Heart left ventricle (tissue), 16 donors: ENCODE measurements at regions of chr4 and their contacts with region 1.

Region 1: GRCh38 chr4:71713611-71714203 is 70.2 kb downstream of the GC start:
- DNase-seq: peak in 1 of 5 donors; percentile 11
- ATAC-seq: peak in 1 of 4 donors; percentile 45
- H3K4me3 ChIP-seq: no peak overlapping the region
- H3K27ac ChIP-seq: no peak overlapping the region
- H3K4me1 ChIP-seq: no peaks in the 10 kb centered on the region
- H3K27me3 ChIP-seq: no peaks in the 10 kb centered on the region
- CTCF ChIP-seq: peak in 11 of 12 donors; percentile 32 to 68 (median 57)
- POLR2A ChIP-seq: no peak

Region 2: GRCh38 chr4:70601422-70602039 is 1112.2 kb before region 1 on chr4:
- intact Hi-C with region 1: loop called in 1 of 10 experiments (anchors 5 kb)
- DNase-seq: peak in 3 of 5 donors; percentile 19 to 34 (median 23)
- ATAC-seq: peak in 3 of 4 donors; percentile 53 to 68 (median 64)
- H3K4me3 ChIP-seq: no peak overlapping the region
- H3K27ac ChIP-seq: no peak overlapping the region
- H3K4me1 ChIP-seq: no peaks in the 10 kb centered on the region
- H3K27me3 ChIP-seq: no peaks in the 10 kb centered on the region
- CTCF ChIP-seq: peak; percentile 35 to 65 (median 58)
- POLR2A ChIP-seq: no peak

Region 3: DNA sequence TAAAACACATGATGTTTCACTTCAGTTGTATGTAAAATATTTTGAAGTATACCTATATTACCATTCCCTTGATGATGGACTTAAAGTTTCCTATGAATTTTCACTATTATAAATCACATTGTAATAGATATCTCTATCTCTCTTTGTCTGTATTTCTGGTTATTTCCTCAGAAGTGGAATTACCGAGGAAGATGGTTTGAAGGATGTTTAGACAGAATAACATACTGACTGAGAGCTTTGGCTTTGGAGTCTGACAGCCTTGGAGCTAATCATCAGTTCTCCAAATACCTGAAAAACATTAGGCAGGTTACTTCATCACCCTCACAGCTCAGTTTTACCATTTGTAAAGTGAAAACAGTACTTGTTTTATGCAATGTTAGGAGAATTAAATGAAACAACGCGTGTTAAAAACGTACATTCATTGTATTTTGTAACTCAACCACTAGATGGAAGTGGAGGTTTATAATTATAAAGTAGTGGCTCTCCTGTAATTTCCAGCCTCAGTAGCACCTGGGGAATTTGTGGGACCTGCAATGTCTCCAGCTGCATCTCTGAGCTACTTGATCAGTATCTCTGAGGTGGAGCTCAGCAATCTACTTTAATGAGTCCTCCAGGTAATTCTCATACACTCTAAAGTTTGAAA is 1061.7 kb before region 1 on chr4:
- intact Hi-C with region 1: loop called in 4 of 10 experiments (anchors 5 to 10 kb)
- DNase-seq: no peak
- ATAC-seq: peak in 3 of 4 donors; percentile 26 to 60 (median 34)
- H3K4me3 ChIP-seq: no peak overlapping the region
- H3K27ac ChIP-seq: no peak overlapping the region
- H3K4me1 ChIP-seq: peaks cover 0 to 6% (median 0%) of the 10 kb centered on the region in 12 donors
- H3K27me3 ChIP-seq: peaks cover 0 to 5% (median 0%) of the 10 kb centered on the region in 9 donors
- CTCF ChIP-seq: peak; percentile 37 to 65 (median 56)
- POLR2A ChIP-seq: no peak

Region 4: GRCh38 chr4:71050809-71051208 is 662.9 kb before region 1 on chr4:
- intact Hi-C with region 1: loop called in 1 of 10 experiments (anchors 5 kb)
- DNase-seq: no peak
- ATAC-seq: no peak
- H3K4me3 ChIP-seq: no peak overlapping the region
- H3K27ac ChIP-seq: no peak overlapping the region
- H3K4me1 ChIP-seq: no peaks in the 10 kb centered on the region
- H3K27me3 ChIP-seq: no peaks in the 10 kb centered on the region
- CTCF ChIP-seq: peak in 2 of 12 donors; percentile 17 to 34
- POLR2A ChIP-seq: no peak

Region 5: GRCh38 chr4:71229477-71230270 is 484.0 kb before region 1 on chr4:
- intact Hi-C with region 1: loop called in 1 of 10 experiments (anchors 5 kb)
- DNase-seq: peak in 3 of 5 donors; percentile 30 to 41 (median 31)
- ATAC-seq: peak in 2 of 4 donors; percentile 61 to 71
- H3K4me3 ChIP-seq: peak overlapping the region in 5 of 12 donors; percentile 0 to 18 (median 8)
- H3K27ac ChIP-seq: peak overlapping the region in 10 of 12 donors; percentile 38 to 85 (median 74)
- H3K4me1 ChIP-seq: peaks cover 0 to 40% (median 13%) of the 10 kb centered on the region in 12 donors
- H3K27me3 ChIP-seq: no peaks in the 10 kb centered on the region
- CTCF ChIP-seq: peak; percentile 44 to 80 (median 68)
- POLR2A ChIP-seq: no peak

Region 6: DNA sequence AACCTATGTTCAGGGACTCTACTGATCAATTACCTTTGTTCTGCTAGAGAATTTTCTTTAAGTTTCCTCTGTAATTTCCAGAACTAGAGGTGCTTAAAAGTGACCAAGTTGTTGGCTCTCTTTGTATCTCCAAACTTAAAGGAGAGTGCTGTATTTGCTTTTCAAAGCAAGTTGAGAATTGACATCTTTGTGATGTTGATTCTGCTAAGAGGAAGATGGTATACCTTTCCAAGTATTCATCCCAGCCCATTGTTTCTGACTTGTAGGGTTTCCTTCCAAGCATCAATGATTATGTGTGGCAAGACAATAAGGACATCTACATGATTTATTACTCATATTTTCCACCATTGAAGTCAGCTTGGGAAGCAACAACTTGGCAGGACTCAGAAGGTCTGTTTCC is 120.4 kb before region 1 on chr4:
- intact Hi-C with region 1: no loop called
- DNase-seq: no peak
- ATAC-seq: no peak
- H3K4me3 ChIP-seq: no peak overlapping the region
- H3K27ac ChIP-seq: no peak overlapping the region
- H3K4me1 ChIP-seq: no peaks in the 10 kb centered on the region
- H3K27me3 ChIP-seq: no peaks in the 10 kb centered on the region
- CTCF ChIP-seq: no peak
- POLR2A ChIP-seq: no peak